K562 (cell line): ENCODE measurements at regions of chr19 and their contacts with region 1.

Region 1: GRCh38 chr19:38849860-38850435 is at the start of gene HNRNPL:
- DNase-seq: peak in 3 of 4 experiments; percentile 90 to 97 (median 93)
- ATAC-seq: peak; percentile 82
- H3K4me3 ChIP-seq: peak within 1 kb of the TSS; percentile 96
- H3K27ac ChIP-seq: peak within 1 kb of the TSS; percentile 99
- H3K4me1 ChIP-seq: peaks cover 16 to 41% of the 10 kb centered on the region in 2 experiments; a peak in 4 of 5 replicates
- H3K27me3 ChIP-seq: no peaks in the 10 kb centered on the region
- CTCF ChIP-seq: peak; percentile 40 to 64 (median 59)
- EP300 ChIP-seq: peak; percentile 29; the same call in 1 of the 2 replicates
- POLR2A ChIP-seq: peak; percentile 84
- RAD21 ChIP-seq: peak; percentile 17 to 20; a peak in 1 of 4 replicates
- polyA plus RNA-seq, gene HNRNPL: 39.5 to 51.4 TPM

Region 2: GRCh38 chr19:38831142-38831605 is 18.8 kb before region 1 on chr19:
- CTCF ChIA-PET with region 1: no interaction called
- POLR2A ChIA-PET with region 1: interaction called, 10 read pairs
- in situ Hi-C with region 1: no loop called
- intact Hi-C with region 1: no loop called
- DNase-seq: peak in 2 of 4 experiments; percentile 53 to 66
- ATAC-seq: peak; percentile 55
- H3K4me3 ChIP-seq: peak overlapping the region; percentile 39
- H3K27ac ChIP-seq: peak overlapping the region; percentile 82
- H3K4me1 ChIP-seq: peaks cover 13 to 29% of the 10 kb centered on the region in 2 experiments; a peak in 4 of 5 replicates
- H3K27me3 ChIP-seq: no peaks in the 10 kb centered on the region
- CTCF ChIP-seq: no peak
- EP300 ChIP-seq: no peak
- POLR2A ChIP-seq: no peak
- RAD21 ChIP-seq: no peak; a peak in 1 of 4 replicates

Region 3: GRCh38 chr19:38838573-38839269 is 11.2 kb before region 1 on chr19:
- CTCF ChIA-PET with region 1: no interaction called
- POLR2A ChIA-PET with region 1: interaction called, 58 read pairs
- in situ Hi-C with region 1: no loop called
- intact Hi-C with region 1: no loop called
- DNase-seq: peak in 1 of 4 experiments; percentile 10
- ATAC-seq: peak; percentile 5; the same call in 1 of the 3 replicates
- H3K4me3 ChIP-seq: no peak overlapping the region
- H3K27ac ChIP-seq: no peak overlapping the region; the same call in 2 of the 3 replicates
- H3K4me1 ChIP-seq: peaks cover 0 to 14% of the 10 kb centered on the region in 2 experiments; a peak in 4 of 5 replicates
- H3K27me3 ChIP-seq: no peaks in the 10 kb centered on the region
- CTCF ChIP-seq: 0 out of 6 replicates have a peak, but pooled peaks of 1 of the 3 experiments have one; percentile 2
- EP300 ChIP-seq: no peak
- POLR2A ChIP-seq: peak; percentile 63; the same call in 1 of the 2 replicates
- RAD21 ChIP-seq: no peak

Region 4: DNA sequence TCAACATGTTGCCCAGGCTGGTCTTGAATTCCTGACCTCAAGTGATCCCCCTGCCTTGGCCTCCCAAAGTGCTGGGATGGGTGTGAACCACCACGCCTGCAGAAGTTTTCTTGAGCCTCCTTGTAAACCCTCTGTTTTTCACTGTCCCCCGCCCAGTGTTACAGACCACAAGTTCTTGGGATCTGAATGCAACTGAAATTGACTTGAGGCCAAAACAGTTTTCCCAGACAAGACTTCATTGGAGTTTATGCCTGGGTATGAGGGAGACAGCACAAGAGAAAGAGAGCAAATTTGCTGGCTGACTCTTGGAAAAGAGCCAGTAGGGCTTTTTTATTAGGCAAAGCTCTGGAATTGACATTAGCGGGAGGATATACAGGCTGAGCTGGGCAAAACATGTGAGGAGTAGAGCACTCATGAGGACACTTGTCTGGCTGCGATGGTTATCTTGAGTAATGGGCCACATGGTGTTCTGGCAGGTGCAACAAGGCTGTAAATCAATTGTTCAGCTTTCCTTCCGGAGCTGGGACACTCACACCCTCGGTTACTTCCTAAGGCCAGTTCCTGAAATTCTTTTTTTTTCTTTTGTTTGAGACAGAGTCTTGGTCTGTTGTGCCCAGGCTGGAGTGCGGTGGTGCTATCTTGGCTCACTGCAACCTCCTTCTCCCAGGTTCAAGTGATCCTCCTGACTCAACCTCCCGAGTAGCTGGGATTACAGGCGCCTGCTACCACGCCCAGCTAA is 12.5 kb after region 1 on chr19:
- CTCF ChIA-PET with region 1: no interaction called
- POLR2A ChIA-PET with region 1: interaction called, 11 read pairs
- in situ Hi-C with region 1: no loop called
- intact Hi-C with region 1: no loop called
- DNase-seq: peak in 1 of 4 experiments; percentile 77
- ATAC-seq: peak; percentile 80
- H3K4me3 ChIP-seq: no peak overlapping the region
- H3K27ac ChIP-seq: peak overlapping the region; percentile 33; the same call in 2 of the 3 replicates
- H3K4me1 ChIP-seq: peaks cover 27 to 36% of the 10 kb centered on the region in 2 experiments
- H3K27me3 ChIP-seq: no peaks in the 10 kb centered on the region
- CTCF ChIP-seq: no peak
- EP300 ChIP-seq: peak; percentile 82
- POLR2A ChIP-seq: no peak
- RAD21 ChIP-seq: 0 out of 4 replicates have a peak, but pooled peaks of 1 of the 2 experiments have one; percentile 7

Region 5: DNA sequence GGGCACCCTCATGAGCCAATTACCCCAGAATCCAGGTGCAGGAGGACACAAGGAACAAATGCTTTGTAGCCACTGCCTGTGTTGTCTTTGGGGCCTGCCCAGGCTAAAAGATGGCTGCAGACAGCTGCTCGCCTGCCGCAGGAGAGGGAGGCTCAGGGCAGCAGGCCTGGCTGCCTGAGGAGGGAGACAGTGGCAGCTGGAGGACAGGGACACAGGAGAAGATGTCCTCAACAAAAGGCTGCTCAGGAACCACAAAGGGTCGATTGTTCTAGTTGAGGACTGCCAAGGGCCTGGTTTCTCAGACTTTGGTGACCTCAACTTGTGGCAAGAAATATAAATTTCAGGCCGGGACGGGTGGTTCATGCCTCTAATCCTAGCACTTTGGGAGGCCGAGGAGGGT is 41.8 kb after region 1 on chr19:
- CTCF ChIA-PET with region 1: no interaction called
- POLR2A ChIA-PET with region 1: interaction called, 4 read pairs
- in situ Hi-C with region 1: no loop called
- intact Hi-C with region 1: loop called (anchors 2 kb)
- DNase-seq: no peak
- ATAC-seq: no peak
- H3K4me3 ChIP-seq: no peak overlapping the region
- H3K27ac ChIP-seq: no peak overlapping the region
- H3K4me1 ChIP-seq: peaks cover 0 to 20% of the 10 kb centered on the region in 2 experiments; a peak in 3 of 5 replicates
- H3K27me3 ChIP-seq: no peaks in the 10 kb centered on the region
- CTCF ChIP-seq: no peak
- EP300 ChIP-seq: no peak
- POLR2A ChIP-seq: no peak
- RAD21 ChIP-seq: no peak